ENCODE measurements at regions of chr9 and their contacts with region 1.

Region 1: GRCh38 chr9:29616844-29617243 is 2043.6 kb upstream of the C9orf72 start:
- DNase-seq: no peak
- H3K4me3 ChIP-seq: no peak overlapping the region
- CTCF ChIP-seq: no peak
- POLR2A ChIP-seq: no peak

Region 2: GRCh38 chr9:31259824-31260223 is 1643.0 kb after region 1 on chr9:
- intact Hi-C with region 1: loop called (anchors 5 kb)
- DNase-seq: no peak
- H3K4me3 ChIP-seq: no peak overlapping the region
- CTCF ChIP-seq: no peak
- POLR2A ChIP-seq: no peak